HCT116 (cell line): ENCODE measurements at regions of chr17 and their contacts with region 1.

Region 1: GRCh38 chr17:59753522-59754467 is 46.3 kb downstream of the VMP1 start:
- DNase-seq: peak; percentile 88
- ATAC-seq: peak; percentile 41
- H3K4me3 ChIP-seq: peak overlapping the region in 1 of 2 experiments; percentile 2; a peak in 1 of 4 replicates
- H3K27ac ChIP-seq: peak overlapping the region; percentile 91
- H3K4me1 ChIP-seq: peaks cover 81 to 94% of the 10 kb centered on the region in 2 experiments
- H3K27me3 ChIP-seq: no peaks in the 10 kb centered on the region
- CTCF ChIP-seq: peak; percentile 68 to 94 (median 91)
- POLR2A ChIP-seq: no peak
- RAD21 ChIP-seq: peak; percentile 98

Region 2: DNA sequence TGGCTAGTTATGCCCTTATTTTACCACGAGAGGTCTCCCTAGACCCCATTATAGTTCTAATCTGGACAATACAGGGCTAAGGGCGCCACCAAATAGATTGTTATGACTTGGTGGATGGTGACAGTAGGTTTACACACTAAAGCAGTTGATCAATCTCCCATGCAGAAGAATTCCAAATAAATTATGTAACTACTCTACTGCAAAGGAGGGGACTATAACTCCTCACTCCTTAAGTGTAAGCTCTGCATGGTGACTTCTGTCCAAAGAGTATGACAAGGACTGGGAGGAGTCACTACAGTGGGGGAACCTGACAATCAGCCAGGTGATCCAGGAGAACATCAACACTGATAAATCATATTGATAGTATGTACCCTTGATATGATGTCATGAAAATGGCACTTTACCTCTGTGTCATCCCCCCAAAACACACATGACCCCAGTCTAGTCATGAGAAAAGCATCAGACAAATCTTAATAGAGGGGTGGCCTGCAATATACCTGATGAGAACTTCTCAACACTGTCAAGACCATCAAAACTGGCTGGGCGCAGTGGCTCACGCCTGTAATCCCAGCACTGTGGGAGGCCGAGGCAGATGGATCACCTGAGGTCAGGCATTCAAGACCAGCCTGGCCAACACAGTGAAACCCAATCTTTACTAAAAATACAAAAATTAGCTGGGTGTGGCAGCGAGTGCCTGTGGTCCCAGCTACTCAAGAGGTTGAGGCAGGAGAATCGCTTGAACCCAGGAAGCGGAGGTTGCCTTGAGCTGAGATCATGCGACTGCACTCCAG is 442.5 kb before region 1 on chr17:
- CTCF ChIA-PET with region 1: interaction called, 3 read pairs
- POLR2A ChIA-PET with region 1: no interaction called
- RAD21 ChIA-PET with region 1: interaction called in 1 of 2 experiments, 3 read pairs
- intact Hi-C with region 1: loop called (anchors 5 kb)
- DNase-seq: peak; percentile 78
- ATAC-seq: peak; percentile 93
- H3K4me3 ChIP-seq: no peak overlapping the region
- H3K27ac ChIP-seq: no peak overlapping the region
- H3K4me1 ChIP-seq: peaks cover 3 to 13% of the 10 kb centered on the region in 2 experiments; a peak in 3 of 4 replicates
- H3K27me3 ChIP-seq: no peaks in the 10 kb centered on the region
- CTCF ChIP-seq: peak; percentile 84 to 99 (median 97); a peak in 5 of 6 replicates
- POLR2A ChIP-seq: no peak
- RAD21 ChIP-seq: peak; percentile 98

Region 3: DNA sequence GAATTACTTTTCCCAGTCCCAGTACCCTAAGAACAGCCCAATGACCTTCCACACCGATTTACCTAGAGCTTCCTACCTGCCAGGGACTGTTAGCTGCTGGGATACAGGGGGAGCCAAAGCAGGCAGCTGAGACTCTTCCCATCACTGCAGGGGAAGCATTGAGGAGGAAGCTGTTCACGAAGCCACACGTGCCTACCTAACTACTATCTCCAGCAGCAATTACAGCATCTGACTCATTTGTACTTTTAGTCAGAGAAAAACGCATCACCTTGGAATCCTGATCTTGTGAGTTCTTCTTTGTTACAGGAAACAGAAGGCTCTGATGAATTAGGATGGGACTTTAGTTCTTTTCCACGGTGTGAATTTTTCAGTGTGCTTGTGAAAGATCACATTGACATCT is 302.1 kb before region 1 on chr17:
- CTCF ChIA-PET with region 1: no interaction called
- POLR2A ChIA-PET with region 1: no interaction called
- RAD21 ChIA-PET with region 1: no interaction called
- intact Hi-C with region 1: no loop called
- DNase-seq: no peak
- ATAC-seq: peak; percentile 58; the same call in 1 of the 2 replicates
- H3K4me3 ChIP-seq: no peak overlapping the region
- H3K27ac ChIP-seq: no peak overlapping the region
- H3K4me1 ChIP-seq: peaks cover 0 to 5% of the 10 kb centered on the region in 2 experiments; a peak in 1 of 4 replicates
- H3K27me3 ChIP-seq: no peaks in the 10 kb centered on the region
- CTCF ChIP-seq: no peak
- POLR2A ChIP-seq: no peak
- RAD21 ChIP-seq: no peak

Region 4: GRCh38 chr17:59490216-59490615 is 263.6 kb before region 1 on chr17:
- CTCF ChIA-PET with region 1: no interaction called
- POLR2A ChIA-PET with region 1: no interaction called
- RAD21 ChIA-PET with region 1: no interaction called
- intact Hi-C with region 1: no loop called
- DNase-seq: no peak
- ATAC-seq: no peak
- H3K4me3 ChIP-seq: no peak overlapping the region
- H3K27ac ChIP-seq: no peak overlapping the region
- H3K4me1 ChIP-seq: 0 out of 4 replicates have a peak, but pooled peaks cover 0 to 3% of the 10 kb centered on the region in 2 experiments
- H3K27me3 ChIP-seq: 0 out of 2 replicates have a peak, but pooled peaks cover 4% of the 10 kb centered on the region
- CTCF ChIP-seq: no peak
- POLR2A ChIP-seq: no peak
- RAD21 ChIP-seq: no peak

Region 5: GRCh38 chr17:59786536-59787319 is 32.9 kb after region 1 on chr17:
- CTCF ChIA-PET with region 1: interaction called, 22 read pairs
- POLR2A ChIA-PET with region 1: interaction called, 78 read pairs
- RAD21 ChIA-PET with region 1: interaction called, 3 to 8 read pairs
- intact Hi-C with region 1: loop called (anchors 1 kb)
- DNase-seq: peak; percentile 100
- ATAC-seq: peak; percentile 78
- H3K4me3 ChIP-seq: peak overlapping the region in 1 of 2 experiments; percentile 20; a peak in 2 of 4 replicates
- H3K27ac ChIP-seq: peak overlapping the region; percentile 96
- H3K4me1 ChIP-seq: peaks cover 88 to 96% of the 10 kb centered on the region in 2 experiments
- H3K27me3 ChIP-seq: no peaks in the 10 kb centered on the region
- CTCF ChIP-seq: no peak
- POLR2A ChIP-seq: no peak
- RAD21 ChIP-seq: peak; percentile 59

Region 6: GRCh38 chr17:59846394-59847165 is 92.8 kb after region 1 on chr17:
- CTCF ChIA-PET with region 1: interaction called, 40 read pairs
- POLR2A ChIA-PET with region 1: interaction called, 443 read pairs
- RAD21 ChIA-PET with region 1: interaction called, 4 read pairs
- intact Hi-C with region 1: loop called (anchors 1 kb)
- DNase-seq: peak; percentile 94
- ATAC-seq: peak; percentile 30
- H3K4me3 ChIP-seq: peak overlapping the region; percentile 9 to 32; a peak in 3 of 4 replicates
- H3K27ac ChIP-seq: peak overlapping the region; percentile 97
- H3K4me1 ChIP-seq: peaks cover 76 to 97% of the 10 kb centered on the region in 2 experiments
- H3K27me3 ChIP-seq: no peaks in the 10 kb centered on the region
- CTCF ChIP-seq: no peak
- POLR2A ChIP-seq: no peak
- RAD21 ChIP-seq: no peak

Region 7: DNA sequence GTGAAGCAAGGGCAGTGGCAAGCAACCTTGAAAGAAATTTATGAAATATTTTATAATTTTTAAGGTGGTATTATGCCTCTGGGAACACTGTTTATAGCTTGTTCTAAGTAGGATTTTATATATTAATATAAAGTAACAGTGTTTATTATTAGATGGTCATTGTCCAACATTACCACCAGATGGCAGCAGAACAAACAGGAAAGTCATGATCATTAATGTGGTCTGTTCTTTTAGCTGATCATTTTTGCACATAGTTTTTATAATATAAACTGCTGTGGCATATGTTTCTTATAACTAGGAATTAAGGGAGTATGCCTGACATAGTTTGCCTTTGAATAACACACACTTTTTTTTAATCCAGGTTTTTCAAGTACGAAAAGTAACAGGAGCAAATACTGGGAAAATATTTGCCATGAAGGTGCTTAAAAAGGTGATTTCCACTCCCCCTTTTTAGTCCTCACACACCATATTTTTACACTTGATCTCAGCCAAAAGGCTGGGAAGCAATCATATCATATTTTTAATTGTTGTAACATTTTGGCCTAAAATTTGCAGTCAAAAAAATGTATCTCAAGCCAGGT is 160.6 kb after region 1 on chr17:
- CTCF ChIA-PET with region 1: interaction called, 11 read pairs
- POLR2A ChIA-PET with region 1: no interaction called
- RAD21 ChIA-PET with region 1: interaction called in 1 of 2 experiments, 3 read pairs
- intact Hi-C with region 1: no loop called
- DNase-seq: peak; percentile 19
- ATAC-seq: peak; percentile 72
- H3K4me3 ChIP-seq: no peak overlapping the region
- H3K27ac ChIP-seq: no peak overlapping the region
- H3K4me1 ChIP-seq: no peaks in the 10 kb centered on the region
- H3K27me3 ChIP-seq: no peaks in the 10 kb centered on the region
- CTCF ChIP-seq: peak; percentile 65 to 76 (median 71); a peak in 5 of 6 replicates
- POLR2A ChIP-seq: no peak
- RAD21 ChIP-seq: peak; percentile 74

Region 8: DNA sequence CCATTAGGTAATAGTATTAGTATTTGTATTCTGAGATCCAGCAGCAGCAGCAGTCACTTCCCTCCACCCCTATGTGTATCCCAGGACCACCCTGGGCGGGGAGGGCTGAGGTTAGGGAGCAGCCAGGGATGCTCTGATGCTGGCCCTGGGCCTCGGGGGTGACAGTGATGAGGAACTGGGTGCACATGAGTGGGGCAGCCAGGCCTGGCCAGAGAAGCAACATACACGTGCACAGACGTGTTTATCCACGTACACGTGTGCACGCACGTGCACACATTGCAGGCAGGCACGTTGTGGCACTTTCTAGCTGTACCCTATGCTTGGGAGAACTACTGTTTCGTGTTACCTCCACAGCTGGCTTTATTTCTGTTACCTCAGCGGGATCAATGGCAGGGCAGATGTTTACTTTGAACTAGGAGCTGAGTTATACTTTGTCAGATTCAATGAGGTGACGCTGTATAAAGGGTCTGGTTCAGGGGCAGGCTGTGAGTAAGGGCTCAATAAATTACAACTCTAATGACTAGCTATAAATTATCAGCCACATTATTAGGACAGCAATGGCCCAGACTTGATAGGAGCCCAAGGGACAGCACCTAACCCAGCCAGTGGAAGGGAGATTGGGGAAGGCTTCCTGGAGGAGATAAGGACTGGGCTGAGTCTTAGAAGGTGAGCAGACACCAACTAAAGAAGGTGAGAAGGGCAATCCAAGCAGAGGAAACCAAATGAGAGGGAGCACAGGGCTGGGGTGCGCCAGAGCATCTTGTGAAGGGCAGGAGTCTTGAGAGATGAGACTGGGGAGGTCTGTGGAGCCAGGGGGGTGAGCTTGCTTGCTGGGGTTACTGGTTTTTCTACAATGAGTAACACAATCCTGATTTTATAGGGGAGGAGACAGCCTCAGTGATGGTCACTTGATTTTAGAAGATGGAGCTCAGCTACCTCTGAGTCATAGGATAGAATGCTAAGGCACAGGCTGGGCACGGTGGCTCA is 373.6 kb after region 1 on chr17:
- CTCF ChIA-PET with region 1: no interaction called
- POLR2A ChIA-PET with region 1: no interaction called
- RAD21 ChIA-PET with region 1: no interaction called
- intact Hi-C with region 1: no loop called
- DNase-seq: no peak
- ATAC-seq: peak; percentile 41; the same call in 1 of the 2 replicates
- H3K4me3 ChIP-seq: no peak overlapping the region
- H3K27ac ChIP-seq: no peak overlapping the region
- H3K4me1 ChIP-seq: no peaks in the 10 kb centered on the region
- H3K27me3 ChIP-seq: no peaks in the 10 kb centered on the region
- CTCF ChIP-seq: no peak
- POLR2A ChIP-seq: no peak
- RAD21 ChIP-seq: no peak

Region 9: GRCh38 chr17:60926466-60927157 is 1172.8 kb after region 1 on chr17:
- CTCF ChIA-PET with region 1: no interaction called
- POLR2A ChIA-PET with region 1: no interaction called
- RAD21 ChIA-PET with region 1: no interaction called
- intact Hi-C with region 1: no loop called
- DNase-seq: no peak
- ATAC-seq: no peak
- H3K4me3 ChIP-seq: no peak overlapping the region
- H3K27ac ChIP-seq: no peak overlapping the region
- H3K4me1 ChIP-seq: no peaks in the 10 kb centered on the region
- H3K27me3 ChIP-seq: no peaks in the 10 kb centered on the region
- CTCF ChIP-seq: no peak
- POLR2A ChIP-seq: no peak
- RAD21 ChIP-seq: no peak